Posterior vena cava (tissue), 2 donors: ENCODE measurements at regions of chr11 and their contacts with region 1.

Region 1: GRCh38 chr11:117002639-117003299 is 95.5 kb downstream of the SIK3 start:
- DNase-seq: no peak

Region 2: GRCh38 chr11:116901211-116901610 is 101.6 kb before region 1 on chr11:
- intact Hi-C with region 1: no loop called
- DNase-seq: no peak

Region 3: GRCh38 chr11:117083011-117083935 is 80.5 kb after region 1 on chr11:
- intact Hi-C with region 1: loop called in 1 of 2 experiments (anchors 10 kb)
- DNase-seq: no peak